GM13976 (cell line): ENCODE measurements at regions of chr5 and their contacts with region 1.

Region 1: GRCh38 chr5:88729084-88729828 is 153.7 kb downstream of the MEF2C start:
- DNase-seq: no peak
- CTCF ChIP-seq: peak; percentile 60

Region 2: GRCh38 chr5:88509403-88509802 is 219.9 kb before region 1 on chr5:
- in situ Hi-C with region 1: no loop called
- DNase-seq: no peak
- CTCF ChIP-seq: no peak

Region 3: DNA sequence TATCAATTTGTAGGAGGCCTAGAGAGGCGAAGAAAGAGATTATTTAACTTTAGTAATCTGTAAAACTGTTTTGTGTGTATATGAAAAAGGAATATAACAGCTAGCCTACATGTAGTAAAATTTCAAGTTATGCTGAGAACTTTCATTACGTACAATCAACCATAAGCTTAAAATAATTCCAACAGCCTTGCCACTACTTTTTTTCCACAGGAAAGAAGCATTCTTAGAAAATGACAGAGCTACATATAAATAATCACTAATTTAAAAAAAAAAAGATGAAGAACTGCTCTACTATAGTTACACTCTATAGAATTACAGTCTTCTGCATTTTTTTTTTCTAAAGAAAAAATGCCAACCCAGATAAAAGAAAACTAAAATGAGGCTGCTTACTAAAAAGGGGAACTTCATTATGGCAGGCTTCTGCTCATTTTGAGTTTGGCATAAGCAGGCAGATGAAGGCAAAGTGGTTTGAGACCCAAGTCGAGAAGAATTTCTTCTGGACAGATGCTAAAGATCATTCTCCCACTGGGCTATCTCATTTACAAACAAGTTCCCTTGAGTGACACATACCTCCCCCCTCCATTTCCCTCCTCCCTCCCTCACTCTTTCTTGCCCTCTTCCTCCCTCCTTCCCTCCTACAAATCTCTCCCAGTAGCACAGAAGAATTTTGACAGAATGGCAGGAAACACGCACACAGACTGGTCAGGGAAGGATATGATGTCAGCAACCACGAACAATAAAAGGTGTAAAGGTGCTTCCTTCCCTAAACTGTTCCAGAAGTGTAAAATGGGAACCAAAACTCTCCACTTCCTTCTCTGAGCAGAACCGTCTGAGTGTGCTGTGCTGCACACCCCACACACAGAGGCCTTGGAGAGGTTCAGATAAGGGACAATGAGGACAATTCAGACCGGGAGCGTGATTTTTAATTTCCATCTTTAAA is 97.7 kb after region 1 on chr5:
- in situ Hi-C with region 1: loop called (anchors 10 kb)
- DNase-seq: no peak
- CTCF ChIP-seq: no peak

Region 4: GRCh38 chr5:88875341-88876234 is 146.3 kb after region 1 on chr5:
- in situ Hi-C with region 1: loop called (anchors 5 kb)
- DNase-seq: no peak
- CTCF ChIP-seq: no peak

Region 5: GRCh38 chr5:89081360-89081759 is 352.1 kb after region 1 on chr5:
- in situ Hi-C with region 1: loop called (anchors 25 kb)
- DNase-seq: no peak
- CTCF ChIP-seq: no peak

Region 6: DNA sequence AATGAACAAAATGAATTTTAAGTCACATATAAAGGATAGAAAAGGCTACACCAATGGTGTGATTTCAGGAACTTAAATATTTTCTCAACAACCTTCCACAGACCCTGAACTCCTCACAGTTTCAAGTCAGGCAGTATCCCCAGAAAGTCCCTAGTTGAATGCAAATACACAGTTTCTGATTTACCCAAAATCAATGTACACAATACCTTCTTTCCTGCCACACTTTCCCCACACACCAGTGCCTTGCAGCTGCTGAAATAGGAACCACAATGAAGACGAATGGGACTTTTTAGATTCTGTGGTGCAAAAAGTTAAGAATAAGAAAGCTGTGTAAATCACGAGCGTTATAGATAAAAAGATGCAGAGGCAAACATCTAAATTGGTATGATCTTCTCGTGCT is 706.1 kb after region 1 on chr5:
- in situ Hi-C with region 1: loop called (anchors 25 kb)
- DNase-seq: peak; percentile 4
- CTCF ChIP-seq: no peak